ENCODE measurements at regions of chr1 and their contacts with region 1.

Region 1: GRCh38 chr1:107782217-107782845 is 182.6 kb downstream of the VAV3 start:
- DNase-seq: no peak
- ATAC-seq: 0 out of 3 replicates have a peak, but pooled peaks have one; percentile 16
- H3K4me3 ChIP-seq: no peak overlapping the region
- H3K27ac ChIP-seq: no peak overlapping the region
- H3K4me1 ChIP-seq: peaks cover 16% of the 10 kb centered on the region; the same call in 1 of the 2 replicates
- H3K27me3 ChIP-seq: no peaks in the 10 kb centered on the region
- CTCF ChIP-seq: peak; percentile 48 to 67 (median 49); a peak in 5 of 6 replicates
- EP300 ChIP-seq: no peak
- POLR2A ChIP-seq: no peak
- RAD21 ChIP-seq: peak; percentile 96

Region 2: GRCh38 chr1:107771377-107771776 is 11.0 kb before region 1 on chr1:
- CTCF ChIA-PET with region 1: interaction called, 6 read pairs
- POLR2A ChIA-PET with region 1: no interaction called
- RAD21 ChIA-PET with region 1: interaction called, 7 read pairs
- SMC1A ChIA-PET with region 1: interaction called, 11 read pairs
- in situ Hi-C with region 1: no loop called
- intact Hi-C with region 1: no loop called
- DNase-seq: no peak
- ATAC-seq: no peak
- H3K4me3 ChIP-seq: no peak overlapping the region
- H3K27ac ChIP-seq: no peak overlapping the region
- H3K4me1 ChIP-seq: no peaks in the 10 kb centered on the region
- H3K27me3 ChIP-seq: no peaks in the 10 kb centered on the region
- CTCF ChIP-seq: no peak
- EP300 ChIP-seq: no peak
- POLR2A ChIP-seq: no peak
- RAD21 ChIP-seq: no peak

Region 3: DNA sequence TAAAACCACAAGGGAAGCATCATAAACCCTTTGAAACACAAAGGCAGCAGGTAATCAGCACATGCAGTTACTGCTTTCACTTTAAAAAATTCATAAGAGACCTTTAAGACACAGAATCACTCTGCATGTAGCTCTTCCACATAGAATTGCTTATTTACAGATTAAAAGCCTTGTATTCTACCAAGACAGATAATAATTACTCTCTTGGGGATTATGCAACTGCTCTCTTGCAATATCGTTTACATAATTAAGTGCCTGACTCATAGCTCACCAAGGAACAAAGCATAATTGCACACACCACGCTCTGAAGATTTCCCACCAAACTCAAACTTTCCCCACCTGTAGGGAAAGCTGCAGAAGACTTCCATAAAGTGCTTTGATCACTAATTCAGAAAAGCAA is 94.8 kb after region 1 on chr1:
- CTCF ChIA-PET with region 1: interaction called, 7 read pairs
- POLR2A ChIA-PET with region 1: no interaction called
- RAD21 ChIA-PET with region 1: interaction called, 4 read pairs
- SMC1A ChIA-PET with region 1: interaction called, 3 read pairs
- in situ Hi-C with region 1: no loop called
- intact Hi-C with region 1: loop called (anchors 5 kb)
- DNase-seq: no peak
- ATAC-seq: peak; percentile 70
- H3K4me3 ChIP-seq: no peak overlapping the region
- H3K27ac ChIP-seq: no peak overlapping the region
- H3K4me1 ChIP-seq: peaks cover 38% of the 10 kb centered on the region
- H3K27me3 ChIP-seq: no peaks in the 10 kb centered on the region
- CTCF ChIP-seq: no peak
- EP300 ChIP-seq: no peak
- POLR2A ChIP-seq: no peak
- RAD21 ChIP-seq: no peak

Region 4: DNA sequence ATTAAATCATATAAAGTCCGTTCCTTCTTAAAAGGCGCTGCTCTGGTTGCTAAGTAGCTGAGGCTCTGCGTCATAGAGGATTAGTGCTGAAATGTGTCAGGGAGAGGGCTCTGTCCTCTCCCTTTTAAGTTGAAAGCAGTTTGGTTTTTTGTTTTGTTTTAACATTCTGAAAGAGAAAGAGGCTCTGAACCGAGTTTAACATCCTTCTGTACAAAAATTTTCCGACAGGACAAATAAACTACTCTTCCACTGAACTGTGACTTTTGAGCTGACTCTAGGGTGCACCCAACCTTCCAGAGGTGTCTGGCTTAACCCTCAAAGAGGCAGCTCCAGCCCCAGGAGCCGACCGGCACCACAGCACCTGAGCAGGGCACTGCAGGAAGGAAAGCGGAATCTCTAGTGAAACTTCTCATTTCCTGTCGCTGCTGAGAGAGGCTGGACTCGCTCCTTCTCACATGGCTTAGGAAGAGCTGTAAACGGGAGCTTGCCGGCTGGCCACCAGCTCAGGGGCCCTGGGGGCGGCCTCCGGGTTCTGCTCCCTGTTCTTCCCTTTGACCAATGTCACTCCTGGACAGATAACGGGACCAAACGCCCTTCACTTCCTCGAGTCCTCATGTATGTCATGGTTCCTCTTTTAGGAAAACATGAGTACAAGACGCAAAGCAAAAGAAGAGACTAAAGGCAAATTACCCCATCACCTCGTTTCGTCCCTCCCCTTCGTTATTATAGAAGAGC is 181.4 kb after region 1 on chr1:
- CTCF ChIA-PET with region 1: interaction called, 8 read pairs
- POLR2A ChIA-PET with region 1: no interaction called
- RAD21 ChIA-PET with region 1: interaction called, 14 read pairs
- SMC1A ChIA-PET with region 1: interaction called, 13 read pairs
- in situ Hi-C with region 1: loop called (anchors 10 kb)
- intact Hi-C with region 1: loop called (anchors 2 kb)
- DNase-seq: peak; percentile 62
- ATAC-seq: peak; percentile 75
- H3K4me3 ChIP-seq: peak overlapping the region; percentile 87
- H3K27ac ChIP-seq: peak overlapping the region; percentile 48
- H3K4me1 ChIP-seq: peaks cover 10% of the 10 kb centered on the region
- H3K27me3 ChIP-seq: no peaks in the 10 kb centered on the region; a peak in 1 of 4 replicates
- CTCF ChIP-seq: no peak
- EP300 ChIP-seq: no peak
- POLR2A ChIP-seq: no peak
- RAD21 ChIP-seq: no peak

Region 5: GRCh38 chr1:108199781-108200570 is 417.6 kb after region 1 on chr1 and contains the start of gene SLC25A24:
- CTCF ChIA-PET with region 1: interaction called, 21 read pairs
- POLR2A ChIA-PET with region 1: no interaction called
- RAD21 ChIA-PET with region 1: interaction called, 23 read pairs
- SMC1A ChIA-PET with region 1: interaction called, 22 read pairs
- in situ Hi-C with region 1: no loop called
- intact Hi-C with region 1: loop called (anchors 5 kb)
- DNase-seq: no peak
- ATAC-seq: peak; percentile 97
- H3K4me3 ChIP-seq: peak within 1 kb of the TSS; percentile 74
- H3K27ac ChIP-seq: no peak within 1 kb of the TSS
- H3K4me1 ChIP-seq: no peaks in the 10 kb centered on the region
- H3K27me3 ChIP-seq: peaks cover 0 to 7% of the 10 kb centered on the region in 2 experiments; a peak in 2 of 4 replicates
- CTCF ChIP-seq: no peak
- EP300 ChIP-seq: no peak
- POLR2A ChIP-seq: peak; percentile 58
- RAD21 ChIP-seq: no peak
- polyA plus RNA-seq, gene SLC25A24: 4.0 to 6.3 TPM

Region 6: GRCh38 chr1:108643492-108644335 is 861.4 kb after region 1 on chr1:
- CTCF ChIA-PET with region 1: interaction called, 11 read pairs
- POLR2A ChIA-PET with region 1: no interaction called
- RAD21 ChIA-PET with region 1: interaction called, 3 read pairs
- SMC1A ChIA-PET with region 1: interaction called, 3 read pairs
- in situ Hi-C with region 1: no loop called
- intact Hi-C with region 1: no loop called
- DNase-seq: peak; percentile 16
- ATAC-seq: peak; percentile 86
- H3K4me3 ChIP-seq: no peak overlapping the region
- H3K27ac ChIP-seq: no peak overlapping the region
- H3K4me1 ChIP-seq: peaks cover 3% of the 10 kb centered on the region; the same call in 1 of the 2 replicates
- H3K27me3 ChIP-seq: no peaks in the 10 kb centered on the region
- CTCF ChIP-seq: peak; percentile 36 to 69 (median 47); a peak in 5 of 6 replicates
- EP300 ChIP-seq: no peak
- POLR2A ChIP-seq: no peak
- RAD21 ChIP-seq: peak; percentile 71

Measured in GM12878 (cell line).